Common myeloid progenitor, CD34-positive (primary cell): ENCODE measurements at regions of chr10 and their contacts with region 1.

Region 1: GRCh38 chr10:95440756-95441546 is 120.2 kb downstream of the SORBS1 start:
- DNase-seq: peak in 2 of 3 donors; percentile 34 to 35
- H3K4me3 ChIP-seq: no peak overlapping the region
- H3K27ac ChIP-seq: no peak overlapping the region
- H3K4me1 ChIP-seq: peaks cover 0 to 5% (median 2%) of the 10 kb centered on the region in 4 experiments
- H3K27me3 ChIP-seq: no peaks in the 10 kb centered on the region

Region 2: GRCh38 chr10:95422233-95422632 is 18.7 kb before region 1 on chr10:
- CTCF ChIA-PET with region 1: interaction called, 11 read pairs
- POLR2A ChIA-PET with region 1: no interaction called
- DNase-seq: no peak
- H3K4me3 ChIP-seq: no peak overlapping the region
- H3K27ac ChIP-seq: no peak overlapping the region
- H3K4me1 ChIP-seq: peaks cover 0 to 8% (median 1%) of the 10 kb centered on the region in 4 experiments
- H3K27me3 ChIP-seq: peaks cover 0 to 3% (median 0%) of the 10 kb centered on the region in 5 experiments